AG04449 (cell line): ENCODE measurements at regions of chr1 and their contacts with region 1.

Region 1: GRCh38 chr1:53945433-53946251 is at the start of gene IFT25:
- DNase-seq: peak; percentile 74
- H3K4me3 ChIP-seq: peak within 1 kb of the TSS; percentile 97
- CTCF ChIP-seq: no peak

Region 2: DNA sequence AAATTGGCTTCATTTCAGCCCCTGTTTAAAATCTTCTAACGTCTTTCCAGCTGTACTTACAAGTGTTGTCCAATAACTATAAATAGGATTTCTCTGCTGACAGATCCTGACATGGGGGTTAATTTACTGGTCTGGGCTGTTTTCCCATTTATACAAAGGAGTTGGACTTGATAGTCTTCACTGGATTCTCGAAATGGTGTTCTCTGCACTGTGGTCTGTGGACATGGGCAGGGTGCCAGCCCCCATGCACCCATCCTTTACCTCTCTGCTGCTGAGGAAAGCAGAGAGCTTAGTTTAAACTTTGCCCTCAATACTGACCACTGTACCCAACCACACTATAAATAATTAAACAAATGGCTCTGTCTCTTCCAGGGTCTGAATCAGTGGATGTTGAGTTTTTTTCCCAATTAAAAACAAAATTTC is 46.4 kb before region 1 on chr1:
- CTCF ChIA-PET with region 1: interaction called, 12 read pairs
- POLR2A ChIA-PET with region 1: interaction called, 5 read pairs
- DNase-seq: no peak
- H3K4me3 ChIP-seq: no peak overlapping the region
- CTCF ChIP-seq: no peak

Region 3: DNA sequence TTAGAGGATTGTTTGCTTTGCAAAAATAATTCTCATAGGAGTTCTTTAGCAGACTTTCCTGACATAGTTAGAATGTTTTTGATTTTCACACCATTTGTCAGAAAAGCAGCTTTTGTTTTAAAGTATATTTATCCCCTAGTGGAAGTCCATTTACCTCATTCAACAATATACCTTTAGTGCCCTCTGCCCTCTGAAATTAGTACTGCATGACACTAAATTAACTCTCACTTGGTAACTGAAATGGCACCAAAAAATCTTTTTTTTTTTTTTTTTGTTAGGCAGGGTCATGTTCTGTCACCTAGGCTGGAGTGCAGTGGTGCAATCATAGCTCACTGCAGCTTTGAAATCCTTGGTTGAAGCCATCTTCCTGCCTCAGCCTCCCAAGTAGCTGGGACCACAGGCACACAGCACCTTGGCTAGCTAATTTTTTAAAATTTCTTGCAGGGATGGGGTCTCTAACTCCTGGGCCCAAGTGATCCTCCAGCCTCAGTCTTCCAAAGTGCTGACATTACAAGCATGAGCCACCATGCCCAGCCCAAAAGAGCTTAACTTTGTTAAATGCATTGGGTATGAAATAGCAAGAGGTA is 14.1 kb after region 1 on chr1:
- CTCF ChIA-PET with region 1: interaction called, 50 read pairs
- POLR2A ChIA-PET with region 1: interaction called, 4 read pairs
- DNase-seq: no peak
- H3K4me3 ChIP-seq: no peak overlapping the region
- CTCF ChIP-seq: peak; percentile 30

Region 4: DNA sequence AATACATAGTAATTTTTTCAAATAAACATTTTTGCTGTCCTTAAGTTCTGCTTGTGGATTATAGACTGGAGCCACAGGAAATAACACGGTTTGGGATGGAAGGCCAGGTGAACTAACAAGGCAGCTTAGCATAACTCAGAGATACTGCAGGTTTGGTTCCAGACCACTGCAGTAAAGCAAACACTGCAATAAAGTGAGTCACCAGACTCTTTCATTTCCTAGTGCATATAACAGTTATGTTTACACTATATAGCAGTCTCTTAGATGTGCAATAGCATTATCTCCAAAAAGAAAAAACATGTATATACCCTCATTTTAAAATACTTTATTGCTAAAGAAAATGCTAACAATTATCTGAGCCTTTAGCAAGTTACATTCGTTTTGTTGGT is 22.5 kb after region 1 on chr1:
- CTCF ChIA-PET with region 1: interaction called, 10 read pairs
- POLR2A ChIA-PET with region 1: no interaction called
- DNase-seq: no peak
- H3K4me3 ChIP-seq: no peak overlapping the region
- CTCF ChIP-seq: no peak